H1 (cell line): ENCODE measurements at regions of chr4 and their contacts with region 1.

Region 1: DNA sequence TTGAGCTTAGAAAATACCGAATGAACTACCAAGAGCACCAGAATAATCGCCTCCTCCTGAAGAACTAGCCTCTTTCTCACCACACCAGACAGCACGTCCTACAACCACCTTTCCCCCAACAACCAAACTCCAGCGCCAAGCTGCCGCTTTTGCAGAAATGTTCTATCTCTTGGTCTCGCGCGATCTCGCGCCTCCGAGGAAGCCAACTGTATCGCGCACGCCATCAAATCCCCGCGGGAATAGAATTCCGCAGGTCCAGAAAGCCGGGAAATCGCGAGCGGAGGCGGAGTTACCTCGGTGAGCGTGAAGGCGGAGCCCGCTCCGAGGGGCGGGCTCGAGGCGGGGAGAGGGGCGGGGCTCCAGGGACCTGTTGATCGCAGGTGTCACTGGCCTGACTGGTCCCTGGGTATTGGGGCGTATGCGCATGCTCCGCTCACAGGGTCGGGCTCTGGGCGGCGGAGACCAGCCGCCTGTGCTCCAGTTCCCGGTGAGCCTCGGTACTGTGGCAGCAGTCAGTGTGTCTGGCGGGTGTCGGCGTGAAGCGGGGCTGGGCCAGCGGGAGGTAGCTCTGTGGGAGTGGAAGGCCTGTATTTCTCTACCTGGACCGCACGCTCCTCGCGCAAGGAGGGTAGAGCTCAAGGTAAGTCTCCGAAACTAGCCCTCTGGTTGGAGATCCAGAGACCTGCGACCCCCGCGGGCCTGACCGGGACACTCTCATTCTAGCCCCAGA is at the start of gene USP53:
- DNase-seq: peak; percentile 97 to 99
- H3K4me3 ChIP-seq: peak within 1 kb of the TSS; percentile 72 to 86 (median 82)
- H3K27ac ChIP-seq: peak within 1 kb of the TSS; percentile 94
- H3K4me1 ChIP-seq: peaks cover 0 to 2% (median 0%) of the 10 kb centered on the region in 4 experiments; a peak in 2 of 7 replicates
- H3K27me3 ChIP-seq: no peaks in the 10 kb centered on the region
- CTCF ChIP-seq: no peak
- EP300 ChIP-seq: no peak
- POLR2A ChIP-seq: peak; percentile 90 to 92
- RAD21 ChIP-seq: no peak
- total RNA-seq, gene USP53: 13.9 and 14.9 TPM in 2 replicates

Region 2: DNA sequence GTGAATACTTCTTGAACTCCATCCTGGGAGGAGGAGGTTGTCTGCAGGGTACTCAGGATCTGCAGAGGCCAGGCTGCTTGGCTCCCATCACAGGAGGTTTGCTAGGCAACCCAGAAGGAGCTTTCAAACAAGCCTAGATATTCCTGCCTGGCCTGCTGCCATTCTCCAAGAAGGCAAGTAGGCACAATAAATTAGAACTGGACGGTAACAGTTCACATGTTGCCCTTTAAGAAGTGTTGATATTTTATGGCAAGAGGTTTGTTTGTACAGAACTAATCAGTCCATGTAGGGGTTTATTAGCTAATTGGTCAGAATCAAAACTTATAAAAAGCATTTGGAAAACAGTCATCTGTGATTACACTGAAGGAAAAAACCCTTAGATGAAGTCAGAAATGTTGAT is 284.4 kb before region 1 on chr4:
- CTCF ChIA-PET with region 1: no interaction called
- POLR2A ChIA-PET with region 1: no interaction called
- DNase-seq: no peak
- H3K4me3 ChIP-seq: no peak overlapping the region
- H3K27ac ChIP-seq: no peak overlapping the region
- H3K4me1 ChIP-seq: no peaks in the 10 kb centered on the region
- H3K27me3 ChIP-seq: no peaks in the 10 kb centered on the region
- CTCF ChIP-seq: no peak
- EP300 ChIP-seq: no peak
- POLR2A ChIP-seq: no peak
- RAD21 ChIP-seq: no peak

Region 3: GRCh38 chr4:119197772-119198212 is 14.6 kb before region 1 on chr4:
- CTCF ChIA-PET with region 1: no interaction called
- POLR2A ChIA-PET with region 1: interaction called, 15 read pairs
- DNase-seq: no peak
- H3K4me3 ChIP-seq: no peak overlapping the region
- H3K27ac ChIP-seq: no peak overlapping the region
- H3K4me1 ChIP-seq: no peaks in the 10 kb centered on the region
- H3K27me3 ChIP-seq: no peaks in the 10 kb centered on the region
- CTCF ChIP-seq: no peak
- EP300 ChIP-seq: no peak
- POLR2A ChIP-seq: no peak
- RAD21 ChIP-seq: no peak

Region 4: DNA sequence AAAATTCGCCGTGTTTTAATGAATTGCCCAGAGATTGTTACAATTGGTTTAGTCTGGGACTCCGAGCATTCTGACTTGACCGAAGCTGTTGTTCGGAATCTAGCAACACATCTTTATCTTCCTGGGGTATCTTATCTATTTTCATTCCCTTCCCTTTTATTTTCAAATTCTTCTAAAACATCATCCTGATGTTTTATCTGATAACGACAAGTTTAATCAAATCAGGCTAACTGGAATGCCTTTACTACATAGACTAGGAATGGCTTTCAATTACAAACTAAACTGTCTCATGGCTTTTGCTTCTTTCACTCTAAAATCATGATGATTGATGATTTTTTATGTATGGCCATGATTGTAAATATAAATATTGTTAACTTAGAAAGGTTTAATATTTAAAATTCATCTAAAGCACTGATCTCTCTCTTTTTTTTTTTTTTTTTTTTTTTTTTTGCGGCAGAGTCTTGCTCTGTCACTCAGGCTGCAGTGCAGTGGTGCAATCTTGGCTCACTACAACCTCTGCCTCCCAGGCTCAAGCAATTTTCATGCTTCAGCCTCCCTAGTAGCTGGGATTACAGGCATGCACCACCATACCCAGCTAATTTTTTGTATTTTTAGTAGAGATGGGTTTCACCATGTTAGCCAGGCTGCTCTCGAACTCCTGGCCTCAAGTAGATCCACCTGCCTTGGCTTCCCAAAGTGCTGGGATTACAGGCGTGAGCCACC is 48.3 kb after region 1 on chr4:
- CTCF ChIA-PET with region 1: interaction called, 18 read pairs
- POLR2A ChIA-PET with region 1: interaction called, 6 read pairs
- DNase-seq: no peak
- H3K4me3 ChIP-seq: no peak overlapping the region
- H3K27ac ChIP-seq: no peak overlapping the region
- H3K4me1 ChIP-seq: no peaks in the 10 kb centered on the region
- H3K27me3 ChIP-seq: no peaks in the 10 kb centered on the region
- CTCF ChIP-seq: no peak
- EP300 ChIP-seq: no peak
- POLR2A ChIP-seq: no peak
- RAD21 ChIP-seq: no peak

Region 5: DNA sequence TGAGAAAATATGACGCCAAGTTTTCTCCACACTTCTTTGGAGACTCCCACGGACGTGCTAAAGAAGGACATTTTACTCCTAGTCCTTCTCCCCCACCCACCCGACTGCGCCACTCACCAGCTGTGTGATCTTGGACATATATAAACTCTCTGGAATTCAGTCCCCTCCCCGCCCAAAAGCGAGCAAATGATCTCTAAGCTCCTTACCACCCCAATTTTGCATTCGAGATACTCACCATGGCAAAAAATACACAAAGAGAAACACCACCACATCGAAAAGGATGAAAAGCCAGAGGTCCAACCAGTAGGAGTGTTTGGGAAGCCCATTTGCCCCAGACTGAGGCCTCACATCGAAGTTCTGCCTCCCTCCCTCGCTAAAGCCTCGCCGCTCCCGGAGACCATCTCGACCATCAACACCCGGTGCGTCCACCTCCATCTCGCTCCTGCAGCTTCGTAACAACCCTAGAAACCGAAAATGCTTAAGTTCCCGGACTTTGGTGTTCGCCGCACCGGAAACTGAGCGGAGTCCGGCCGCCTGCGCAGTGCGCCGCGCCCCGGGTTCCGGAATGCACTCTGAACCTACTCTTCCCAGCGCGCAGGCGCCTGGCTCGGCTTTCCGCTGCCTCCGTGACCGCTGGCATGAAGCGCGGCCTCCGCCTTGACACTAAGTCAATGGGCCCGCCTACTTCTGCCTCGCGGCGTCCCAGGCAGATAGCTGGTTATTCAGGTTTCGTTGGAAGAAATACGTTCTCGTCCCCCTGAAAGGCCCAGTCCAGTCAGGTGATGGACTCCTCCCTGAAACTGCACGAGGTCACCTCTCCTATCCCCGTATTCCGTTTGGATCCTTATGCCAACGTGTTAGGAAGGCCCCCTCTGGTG is 87.9 kb after region 1 on chr4:
- CTCF ChIA-PET with region 1: interaction called, 5 read pairs
- POLR2A ChIA-PET with region 1: interaction called, 14 read pairs
- DNase-seq: peak; percentile 79 to 93
- H3K4me3 ChIP-seq: peak overlapping the region; percentile 85 to 96 (median 90)
- H3K27ac ChIP-seq: peak overlapping the region; percentile 75
- H3K4me1 ChIP-seq: peaks cover 2 to 6% (median 3%) of the 10 kb centered on the region in 4 experiments; a peak in 6 of 7 replicates
- H3K27me3 ChIP-seq: no peaks in the 10 kb centered on the region
- CTCF ChIP-seq: peak in 1 of 3 experiments; percentile 5; a peak in 1 of 4 replicates
- EP300 ChIP-seq: no peak
- POLR2A ChIP-seq: peak; percentile 64 to 86
- RAD21 ChIP-seq: peak in 1 of 2 experiments; percentile 9; a peak in 1 of 4 replicates